ENCODE measurements at regions of chr7 and their contacts with region 1.

Region 1: GRCh38 chr7:107816011-107816566 is 13.1 kb upstream of the SLC26A3 start:
- DNase-seq: no peak
- H3K4me3 Mint-ChIP-seq: no peak overlapping the region
- H3K27ac Mint-ChIP-seq: peak overlapping the region; percentile 1
- H3K4me1 Mint-ChIP-seq: peaks cover 32% of the 10 kb centered on the region
- H3K27me3 Mint-ChIP-seq: peaks cover 2% of the 10 kb centered on the region

Region 2: DNA sequence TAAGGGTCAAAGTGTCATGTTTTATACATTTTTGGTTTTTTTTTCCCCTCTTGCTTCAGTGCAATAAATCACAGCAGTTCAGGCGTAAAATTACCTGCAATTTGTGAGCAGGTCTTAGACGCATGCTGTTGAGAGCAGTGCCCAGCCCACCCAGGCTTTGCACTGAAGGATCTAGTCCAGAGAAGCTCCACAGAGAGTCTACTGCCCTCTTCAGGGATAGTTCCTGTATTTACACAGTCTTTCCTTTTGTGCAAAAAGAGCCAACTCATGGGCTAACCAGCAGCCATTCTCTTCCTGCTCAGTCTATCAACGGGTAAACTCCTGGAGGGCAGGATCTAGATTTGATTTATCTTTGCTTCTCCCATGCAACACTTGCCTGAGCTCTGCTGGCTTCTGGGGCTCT is 1449.1 kb before region 1 on chr7:
- CTCF ChIA-PET with region 1: no interaction called
- intact Hi-C with region 1: loop called (anchors 10 kb)
- DNase-seq: no peak
- H3K4me3 Mint-ChIP-seq: no peak overlapping the region
- H3K27ac Mint-ChIP-seq: peak overlapping the region; percentile 70
- H3K4me1 Mint-ChIP-seq: peaks cover 44% of the 10 kb centered on the region
- H3K27me3 Mint-ChIP-seq: peaks cover 23% of the 10 kb centered on the region

Region 3: DNA sequence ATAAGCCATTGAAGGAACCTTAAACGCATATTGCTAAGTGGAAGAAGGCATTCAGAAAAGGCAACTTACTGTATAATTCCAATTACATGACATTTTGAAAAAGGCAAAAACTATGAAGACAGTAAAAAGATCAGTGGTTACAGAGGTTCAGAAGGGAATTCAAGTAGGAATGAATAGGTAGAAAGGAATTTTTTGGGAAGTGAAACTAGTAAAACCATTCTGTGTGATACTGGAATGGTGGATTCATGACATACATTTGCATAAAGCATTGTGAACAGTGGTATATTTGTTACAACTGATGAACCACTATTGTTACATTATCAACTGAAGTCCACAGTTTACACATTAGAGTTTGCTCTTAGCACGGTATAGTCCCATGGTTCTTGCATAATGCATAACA is 460.5 kb before region 1 on chr7:
- CTCF ChIA-PET with region 1: no interaction called
- intact Hi-C with region 1: no loop called
- DNase-seq: no peak
- H3K4me3 Mint-ChIP-seq: no peak overlapping the region
- H3K27ac Mint-ChIP-seq: no peak overlapping the region
- H3K4me1 Mint-ChIP-seq: no peaks in the 10 kb centered on the region
- H3K27me3 Mint-ChIP-seq: no peaks in the 10 kb centered on the region

Region 4: DNA sequence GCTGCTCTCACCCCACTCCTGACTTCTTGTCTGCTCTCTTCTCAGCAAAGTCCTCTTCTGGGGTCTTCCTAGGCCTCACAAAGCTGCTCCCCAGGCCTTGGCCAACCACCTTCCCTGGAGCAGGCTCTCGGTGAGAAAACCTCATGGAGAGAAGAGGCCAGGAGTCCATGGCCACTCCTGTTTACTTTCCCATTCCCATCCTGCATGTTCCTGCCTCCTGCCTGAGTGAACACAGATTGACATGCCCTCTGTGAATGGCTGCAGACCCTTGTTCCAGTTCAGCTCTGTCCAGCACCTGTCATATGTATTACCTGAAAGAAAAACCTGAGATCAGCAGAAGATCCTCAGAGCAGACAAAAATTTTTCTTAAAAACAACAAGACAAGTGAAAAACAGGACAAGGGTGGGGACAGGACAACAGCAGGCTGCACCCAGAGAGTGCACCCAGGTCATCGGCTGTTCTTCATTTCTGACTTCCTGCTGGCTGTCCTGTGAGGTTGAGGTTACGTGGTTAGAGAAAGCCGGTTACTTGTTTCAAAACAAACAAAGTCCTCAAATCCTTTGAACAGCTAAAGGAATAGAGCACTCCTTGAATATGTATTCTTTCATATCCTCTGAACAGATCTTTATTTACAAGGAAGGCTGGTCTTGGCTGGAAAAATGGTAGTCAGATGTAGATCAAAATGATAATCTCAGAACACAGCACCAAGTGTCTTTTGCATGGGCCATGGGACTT is 40.9 kb after region 1 on chr7:
- CTCF ChIA-PET with region 1: no interaction called
- intact Hi-C with region 1: loop called (anchors 1 kb)
- DNase-seq: peak; percentile 28
- H3K4me3 Mint-ChIP-seq: no peak overlapping the region
- H3K27ac Mint-ChIP-seq: no peak overlapping the region
- H3K4me1 Mint-ChIP-seq: peaks cover 16% of the 10 kb centered on the region
- H3K27me3 Mint-ChIP-seq: no peaks in the 10 kb centered on the region

Region 5: DNA sequence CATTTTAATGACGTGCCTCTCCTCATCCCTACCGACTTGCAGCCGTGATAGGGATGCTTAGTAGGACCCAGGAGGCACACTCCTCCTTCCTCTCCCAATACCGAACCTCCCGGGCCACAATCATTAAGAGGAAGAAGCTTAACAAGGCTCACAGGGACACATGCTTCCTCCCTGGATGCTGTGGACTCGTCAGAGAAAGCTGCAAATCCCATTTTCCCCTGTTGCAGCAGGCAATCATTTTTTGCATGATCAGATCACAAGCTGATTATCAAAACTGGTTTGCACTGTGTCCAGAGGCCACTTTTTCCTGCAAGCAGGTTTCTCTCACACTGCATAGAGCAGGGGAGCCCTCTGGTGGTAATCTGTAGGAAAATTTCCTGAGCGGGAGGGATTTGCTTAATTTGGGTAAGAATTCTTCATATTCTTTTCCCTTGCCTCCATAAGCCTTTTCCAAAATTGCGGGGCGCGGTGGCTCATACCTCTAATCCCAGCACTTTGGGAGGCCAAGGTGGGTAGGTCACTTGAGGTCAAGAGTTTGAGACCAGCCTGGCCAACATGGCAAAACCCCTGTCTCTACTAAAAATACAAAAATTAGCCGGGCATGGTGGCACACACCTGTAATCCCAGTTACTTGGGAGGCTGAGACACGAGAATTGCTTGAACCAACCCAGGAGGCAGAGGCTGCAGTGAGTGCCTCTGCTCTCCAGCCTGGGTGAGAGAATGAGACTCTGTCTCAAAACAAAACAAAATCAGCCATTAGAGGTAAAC is 330.2 kb after region 1 on chr7:
- CTCF ChIA-PET with region 1: no interaction called
- intact Hi-C with region 1: no loop called
- DNase-seq: peak; percentile 64
- H3K4me3 Mint-ChIP-seq: no peak overlapping the region
- H3K27ac Mint-ChIP-seq: no peak overlapping the region
- H3K4me1 Mint-ChIP-seq: no peaks in the 10 kb centered on the region
- H3K27me3 Mint-ChIP-seq: no peaks in the 10 kb centered on the region